Sigmoid colon (tissue), 7 donors: ENCODE measurements at regions of chr21 and their contacts with region 1.

Region 1: DNA sequence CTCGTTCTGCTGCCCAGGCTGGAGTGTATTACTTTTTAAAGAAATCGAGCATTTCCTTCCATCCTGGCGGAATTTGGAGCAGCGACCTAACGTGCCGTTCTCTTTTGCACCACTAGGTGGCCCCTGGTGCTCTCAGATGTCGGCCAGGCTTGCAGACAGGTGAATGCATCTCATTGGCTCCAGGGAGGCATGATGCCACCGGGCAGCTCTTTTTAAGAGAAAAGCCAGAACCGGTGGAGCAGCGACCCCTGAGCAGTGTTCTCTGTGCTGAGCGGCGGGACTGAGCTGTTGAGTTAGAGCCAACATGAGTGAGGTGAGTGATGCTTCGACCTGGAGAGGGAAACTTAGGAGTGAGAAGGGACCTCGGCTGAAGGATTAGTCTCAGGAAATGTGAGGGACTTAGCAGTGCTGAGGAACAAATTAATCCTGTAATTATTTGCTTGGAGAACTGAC is at the start of gene PCP4:
- DNase-seq: peak; percentile 83
- H3K4me3 ChIP-seq: peak within 1 kb of the TSS; percentile 27 to 42 (median 40)
- H3K27ac ChIP-seq: peak within 1 kb of the TSS; percentile 44 to 74 (median 69)
- H3K4me1 ChIP-seq: peaks cover 0 to 13% (median 0%) of the 10 kb centered on the region in 4 donors
- H3K27me3 ChIP-seq: no peaks in the 10 kb centered on the region
- CTCF ChIP-seq: peak; percentile 53 to 85 (median 80)
- EP300 ChIP-seq: no peak
- POLR2A ChIP-seq: no peak
- total RNA-seq, gene PCP4: 88.8 to 198 (median 172) TPM

Region 2: DNA sequence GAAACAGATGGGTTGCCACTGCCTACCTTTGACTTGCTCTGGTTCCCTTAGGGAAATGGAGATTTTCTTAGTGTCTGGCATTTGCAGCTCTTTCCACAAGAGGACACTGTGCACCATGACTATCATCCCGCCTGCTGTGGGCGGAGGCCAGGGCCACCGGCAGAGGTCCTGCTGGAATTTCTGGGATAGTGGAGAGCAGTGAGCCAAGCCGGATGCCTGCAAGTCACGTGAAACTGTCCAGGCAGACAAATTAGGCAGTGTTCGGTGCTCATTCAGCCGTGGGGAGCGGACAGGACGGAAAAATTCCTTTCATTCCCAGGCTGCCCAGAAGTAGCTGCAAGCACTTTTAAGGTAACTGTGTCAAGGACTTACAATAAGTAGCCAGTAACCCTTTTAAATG is 78.8 kb before region 1 on chr21:
- intact Hi-C with region 1: loop called (anchors 5 kb)
- DNase-seq: peak; percentile 79
- H3K4me3 ChIP-seq: peak overlapping the region in 1 of 4 donors; percentile 10
- H3K27ac ChIP-seq: peak overlapping the region in 3 of 4 donors; percentile 57 to 73 (median 66)
- H3K4me1 ChIP-seq: peaks cover 0 to 17% (median 8%) of the 10 kb centered on the region in 4 donors
- H3K27me3 ChIP-seq: no peaks in the 10 kb centered on the region
- CTCF ChIP-seq: peak; percentile 72 to 92 (median 85)
- EP300 ChIP-seq: no peak
- POLR2A ChIP-seq: no peak

Region 3: DNA sequence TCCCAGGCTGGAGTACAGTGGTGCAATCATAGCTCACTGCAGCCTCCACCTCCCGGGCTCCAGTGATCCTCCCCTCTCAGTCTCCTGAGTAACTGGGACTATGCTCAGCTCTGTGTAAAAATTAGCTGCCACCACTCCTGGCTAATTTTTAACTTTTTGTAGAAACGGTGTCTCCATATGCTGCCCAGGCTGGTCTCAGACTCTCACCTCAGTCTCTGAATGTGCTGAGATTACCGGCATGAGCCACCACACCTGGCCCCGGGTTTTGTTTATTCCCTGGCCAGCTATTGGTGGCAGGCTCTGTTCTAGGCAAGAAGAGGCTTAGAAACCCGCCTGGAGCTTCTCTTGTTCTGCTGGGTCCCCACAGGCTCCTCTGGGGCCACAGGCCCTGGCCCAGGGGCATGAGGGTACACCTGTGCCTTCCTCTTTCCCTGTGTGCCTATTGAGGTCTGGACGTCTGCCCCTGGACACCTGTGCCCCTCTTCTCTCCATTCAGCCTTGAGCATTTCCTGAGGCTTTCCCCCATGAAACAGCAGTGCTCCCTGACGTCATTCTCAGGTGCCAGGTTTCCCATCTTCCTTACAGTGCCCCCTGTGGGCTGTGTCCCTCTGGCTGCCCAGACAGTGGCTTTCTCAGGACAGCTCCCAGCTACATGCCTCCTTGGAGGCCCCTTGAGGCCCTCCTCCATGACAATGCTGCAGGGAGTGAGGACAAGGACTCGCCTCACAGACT is 57.5 kb after region 1 on chr21:
- intact Hi-C with region 1: no loop called
- DNase-seq: no peak
- H3K4me3 ChIP-seq: no peak overlapping the region
- H3K27ac ChIP-seq: no peak overlapping the region
- H3K4me1 ChIP-seq: peaks cover 0 to 4% (median 0%) of the 10 kb centered on the region in 4 donors
- H3K27me3 ChIP-seq: no peaks in the 10 kb centered on the region
- CTCF ChIP-seq: no peak
- EP300 ChIP-seq: no peak
- POLR2A ChIP-seq: no peak

Region 4: DNA sequence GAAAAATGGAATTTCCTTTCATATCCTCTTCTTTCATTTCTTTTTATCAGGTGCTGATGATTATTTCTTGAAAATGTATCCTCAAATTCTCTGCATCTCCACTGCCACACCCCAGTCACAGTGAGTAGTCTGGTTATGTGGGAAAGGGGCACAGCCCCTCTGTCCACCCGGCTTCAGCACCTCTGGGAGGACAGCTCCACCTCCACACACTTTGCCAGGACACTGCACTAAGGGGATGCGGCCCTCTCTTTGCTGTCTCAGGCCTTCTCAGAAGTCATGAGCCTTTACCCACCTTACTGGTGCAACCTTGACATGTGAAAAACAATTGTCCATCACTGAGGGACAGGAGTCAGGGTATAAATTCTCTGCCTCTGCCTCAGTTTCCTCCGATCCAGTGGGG is 433.1 kb after region 1 on chr21:
- intact Hi-C with region 1: no loop called
- DNase-seq: no peak
- H3K4me3 ChIP-seq: no peak overlapping the region
- H3K27ac ChIP-seq: no peak overlapping the region
- H3K4me1 ChIP-seq: no peaks in the 10 kb centered on the region
- H3K27me3 ChIP-seq: no peaks in the 10 kb centered on the region
- CTCF ChIP-seq: no peak
- EP300 ChIP-seq: no peak
- POLR2A ChIP-seq: no peak